Activated CD4-positive, alpha-beta T cell treated with anti-CD3 and anti-CD28 coated beads for 36 hours (primary cell): ENCODE measurements at regions of chr6 and their contacts with region 1.

Region 1: DNA sequence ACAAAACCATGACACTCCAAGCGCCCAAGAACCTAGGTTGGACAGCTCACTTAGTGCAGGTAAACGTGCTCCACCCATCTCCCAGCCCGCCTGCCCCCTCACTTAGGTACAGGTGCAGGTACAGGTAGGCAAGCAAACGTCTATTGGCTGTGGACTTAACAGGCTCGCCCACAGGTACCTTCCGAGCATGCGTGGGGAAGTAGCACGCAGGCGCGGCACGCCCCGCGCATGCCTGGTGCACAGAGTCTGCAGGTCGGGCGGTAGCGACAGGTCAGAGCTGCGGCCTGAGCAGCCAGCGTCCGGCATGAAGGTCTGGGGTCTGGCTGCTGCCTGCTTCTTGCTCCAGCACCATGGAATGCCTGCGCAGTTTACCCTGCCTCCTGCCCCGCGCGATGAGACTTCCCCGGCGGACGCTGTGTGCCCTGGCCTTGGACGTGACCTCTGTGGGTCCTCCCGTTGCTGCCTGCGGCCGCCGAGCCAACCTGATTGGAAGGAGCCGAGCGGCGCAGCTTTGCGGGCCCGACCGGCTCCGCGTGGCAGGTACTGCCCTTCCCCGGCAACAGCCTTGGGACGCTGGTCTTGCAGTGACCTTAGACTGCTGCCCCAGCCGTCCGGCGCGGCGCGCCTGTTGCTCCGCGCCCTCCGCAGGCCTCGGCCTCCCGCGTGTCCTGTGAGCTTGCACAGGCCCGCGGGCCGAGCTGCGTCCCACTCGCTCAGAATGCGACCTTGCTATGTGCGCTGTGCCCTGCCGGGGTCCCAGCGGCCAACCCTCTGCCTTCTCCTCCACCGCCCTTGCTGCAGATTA is at the start of gene MRS2:
- DNase-seq: peak; percentile 84
- ATAC-seq: peak; percentile 97
- H3K4me3 Mint-ChIP-seq: peak within 1 kb of the TSS; percentile 93
- H3K27ac Mint-ChIP-seq: peak within 1 kb of the TSS; percentile 86
- H3K4me1 Mint-ChIP-seq: peaks cover 24% of the 10 kb centered on the region
- H3K27me3 Mint-ChIP-seq: peaks cover 13% of the 10 kb centered on the region
- total RNA-seq, gene MRS2: 21.0 to 25.5 TPM

Region 2: GRCh38 chr6:24359640-24360454 is 43.1 kb before region 1 on chr6:
- CTCF ChIA-PET with region 1: interaction called, 4 read pairs
- POLR2A ChIA-PET with region 1: no interaction called
- intact Hi-C with region 1: loop called (anchors 1 to 2 kb)
- DNase-seq: peak; percentile 95
- ATAC-seq: peak; percentile 96
- H3K4me3 Mint-ChIP-seq: peak overlapping the region; percentile 70
- H3K27ac Mint-ChIP-seq: peak overlapping the region; percentile 61
- H3K4me1 Mint-ChIP-seq: peaks cover 28% of the 10 kb centered on the region
- H3K27me3 Mint-ChIP-seq: peaks cover 18% of the 10 kb centered on the region

Region 3: DNA sequence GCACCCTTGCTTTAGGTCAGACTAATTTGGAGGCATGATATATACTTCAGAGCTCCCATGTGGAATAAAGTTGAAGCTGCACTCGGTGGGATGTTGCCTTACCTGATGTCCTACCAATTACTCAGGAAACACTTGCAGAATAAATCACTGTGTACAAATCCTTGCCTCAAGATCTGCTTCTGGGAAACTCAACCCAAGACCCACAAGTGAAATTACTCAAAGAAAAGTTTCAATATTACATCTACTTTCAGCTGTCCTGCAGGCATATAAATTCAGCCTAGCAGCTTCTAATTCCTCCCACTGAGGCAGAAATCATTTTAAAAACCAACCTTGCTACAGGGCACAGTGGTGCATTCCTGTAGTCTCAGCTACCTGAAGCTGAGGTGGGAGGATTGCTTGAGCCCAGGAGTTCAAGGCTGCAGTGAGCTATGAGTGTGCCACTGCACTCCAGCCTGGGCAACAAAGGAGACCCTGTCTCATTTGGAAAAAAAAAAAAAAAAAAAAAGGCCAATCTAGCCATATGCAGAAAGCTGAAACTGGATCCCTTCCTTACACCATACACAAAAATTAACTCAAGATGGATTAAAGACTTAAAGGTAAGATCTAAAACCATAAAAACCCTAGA is 24.3 kb before region 1 on chr6:
- CTCF ChIA-PET with region 1: no interaction called
- POLR2A ChIA-PET with region 1: no interaction called
- intact Hi-C with region 1: no loop called
- DNase-seq: no peak
- ATAC-seq: no peak
- H3K4me3 Mint-ChIP-seq: no peak overlapping the region
- H3K27ac Mint-ChIP-seq: no peak overlapping the region
- H3K4me1 Mint-ChIP-seq: no peaks in the 10 kb centered on the region
- H3K27me3 Mint-ChIP-seq: peaks cover 7% of the 10 kb centered on the region

Region 4: DNA sequence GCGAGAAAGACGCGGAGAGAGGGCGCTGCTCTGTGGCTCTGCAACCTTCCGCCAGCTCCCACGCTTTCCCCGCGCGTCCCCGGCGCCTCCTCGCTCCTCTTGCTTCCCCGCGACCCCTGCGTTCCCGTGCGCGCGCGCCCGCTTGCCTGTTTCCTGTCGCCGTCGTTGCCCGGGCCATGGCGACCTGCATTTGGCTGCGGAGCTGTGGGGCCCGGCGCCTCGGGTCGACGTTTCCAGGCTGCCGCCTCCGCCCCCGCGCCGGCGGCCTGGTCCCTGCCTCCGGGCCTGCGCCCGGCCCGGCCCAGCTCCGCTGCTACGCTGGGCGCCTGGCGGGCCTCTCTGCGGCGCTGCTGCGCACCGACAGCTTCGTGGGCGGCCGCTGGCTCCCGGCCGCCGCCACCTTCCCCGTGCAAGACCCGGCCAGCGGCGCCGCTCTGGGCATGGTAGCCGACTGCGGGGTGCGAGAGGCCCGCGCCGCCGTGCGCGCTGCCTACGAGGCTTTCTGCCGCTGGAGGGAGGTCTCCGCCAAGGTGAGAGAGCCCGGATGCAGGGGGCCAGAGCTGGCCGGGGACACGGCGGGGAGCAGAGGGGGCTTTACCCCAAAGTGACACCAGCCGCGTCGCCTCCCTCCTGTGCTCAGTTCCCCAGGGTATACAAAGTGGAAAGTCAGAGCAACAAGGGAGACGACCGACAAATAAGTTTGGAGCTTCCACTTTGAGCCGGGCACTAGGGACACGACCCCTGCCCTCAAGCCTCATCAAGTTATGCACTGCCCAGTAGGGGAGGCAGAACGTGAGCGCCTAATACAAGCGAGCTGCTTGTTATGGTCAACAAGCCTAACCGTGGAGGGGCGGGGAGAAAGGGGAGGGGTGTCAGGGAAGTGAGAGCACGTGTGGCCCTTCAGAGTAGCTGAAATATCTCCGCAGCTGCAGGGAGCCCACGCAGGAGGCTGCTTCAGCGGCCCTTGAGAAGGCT is 92.2 kb after region 1 on chr6 and contains the start of gene ALDH5A1:
- CTCF ChIA-PET with region 1: no interaction called
- POLR2A ChIA-PET with region 1: no interaction called
- intact Hi-C with region 1: loop called in 1 of 2 experiments (anchors 2 kb)
- DNase-seq: peak; percentile 92
- ATAC-seq: peak; percentile 84
- H3K4me3 Mint-ChIP-seq: peak within 1 kb of the TSS; percentile 77
- H3K27ac Mint-ChIP-seq: peak within 1 kb of the TSS; percentile 76
- H3K4me1 Mint-ChIP-seq: peaks cover 14% of the 10 kb centered on the region
- H3K27me3 Mint-ChIP-seq: no peaks in the 10 kb centered on the region
- total RNA-seq, gene ALDH5A1: 16.5 to 18.8 TPM

Region 5: DNA sequence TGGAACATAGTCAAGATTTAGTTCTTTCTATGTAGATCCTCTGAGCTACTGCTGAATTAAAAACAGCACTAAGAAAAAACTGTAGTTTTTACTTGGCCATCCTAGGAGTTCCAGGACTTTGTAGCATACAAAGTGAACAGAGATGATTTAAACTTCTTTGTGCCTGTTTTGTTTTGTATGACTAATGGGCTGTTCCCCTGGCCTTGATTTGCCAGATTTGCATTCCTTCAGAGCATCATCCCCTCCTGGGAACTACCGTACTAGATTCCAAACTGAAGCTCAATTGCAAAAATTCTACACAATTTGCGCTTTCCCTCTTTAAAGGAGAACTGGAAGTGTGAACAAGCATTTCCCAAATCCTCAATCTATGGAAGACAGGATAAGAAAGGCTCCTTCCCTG is 287.1 kb after region 1 on chr6:
- CTCF ChIA-PET with region 1: no interaction called
- POLR2A ChIA-PET with region 1: no interaction called
- intact Hi-C with region 1: loop called in 1 of 2 experiments (anchors 10 kb)
- DNase-seq: no peak
- ATAC-seq: no peak
- H3K4me3 Mint-ChIP-seq: no peak overlapping the region
- H3K27ac Mint-ChIP-seq: no peak overlapping the region
- H3K4me1 Mint-ChIP-seq: peaks cover 26% of the 10 kb centered on the region
- H3K27me3 Mint-ChIP-seq: no peaks in the 10 kb centered on the region